HAP-1 (cell line): ENCODE measurements at regions of chr5 and their contacts with region 1.

Region 1: DNA sequence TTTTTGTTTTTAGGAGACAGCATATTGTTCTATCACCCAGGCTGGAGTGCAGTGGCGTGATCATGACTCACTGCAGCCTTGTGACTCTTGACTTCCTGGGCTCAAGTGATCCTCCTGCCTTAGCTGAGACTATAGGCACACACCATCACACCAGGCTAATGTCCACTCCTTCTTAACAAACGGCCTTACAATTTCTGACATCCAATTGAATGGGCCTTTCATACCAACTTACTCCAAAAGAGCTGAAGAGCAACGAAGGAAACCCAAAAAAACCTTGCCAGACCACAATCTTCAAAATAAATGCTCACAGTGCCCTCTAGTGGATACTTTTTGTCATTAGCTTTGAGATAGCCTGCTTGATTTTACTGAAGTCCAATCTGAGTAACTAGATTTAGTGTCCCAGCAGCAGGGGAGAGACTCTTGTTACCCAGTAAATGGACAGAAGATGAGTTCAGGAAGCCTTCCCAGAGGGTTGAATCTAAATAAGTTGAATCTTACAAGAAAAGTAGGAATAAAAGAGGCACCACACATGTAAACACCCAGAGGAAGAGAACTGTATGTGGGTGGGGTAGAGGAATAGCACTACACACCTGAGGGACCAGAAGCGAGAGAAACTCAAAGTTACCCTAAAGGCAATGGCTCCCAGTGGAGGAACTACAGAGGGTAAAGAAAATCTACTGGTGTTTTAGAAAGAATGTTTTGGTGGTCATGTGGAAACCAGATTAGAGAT is 9.3 kb downstream of the ZNF622 start:
- DNase-seq: peak; percentile 30 to 45
- H3K4me3 ChIP-seq: no peak overlapping the region
- H3K4me1 ChIP-seq: no peaks in the 10 kb centered on the region
- H3K27me3 ChIP-seq: no peaks in the 10 kb centered on the region

Region 2: DNA sequence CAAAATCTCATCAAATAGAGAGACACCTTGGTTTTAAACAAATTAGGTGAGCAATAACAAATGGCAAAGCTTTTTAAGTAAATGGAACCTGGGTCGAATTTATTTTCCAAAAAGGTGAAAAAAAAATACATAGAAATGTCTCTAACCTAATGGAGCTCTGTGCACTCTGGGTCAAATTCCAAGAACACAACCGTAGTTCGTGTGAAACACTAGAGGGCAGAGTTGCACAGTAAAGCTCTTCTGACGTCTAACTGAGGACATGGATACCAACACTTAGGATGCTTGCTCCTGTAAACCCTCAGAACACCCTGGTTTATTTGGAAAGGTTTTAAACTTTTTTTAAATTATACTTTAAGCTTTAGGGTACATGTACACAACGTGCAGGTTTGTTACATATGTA is 295.6 kb before region 1 on chr5:
- in situ Hi-C with region 1: loop called (anchors 10 kb)
- DNase-seq: peak; percentile 45 to 53
- H3K4me3 ChIP-seq: no peak overlapping the region
- H3K4me1 ChIP-seq: no peaks in the 10 kb centered on the region
- H3K27me3 ChIP-seq: no peaks in the 10 kb centered on the region

Region 3: GRCh38 chr5:16364910-16365309 is 91.4 kb before region 1 on chr5:
- in situ Hi-C with region 1: no loop called
- DNase-seq: no peak
- H3K4me3 ChIP-seq: no peak overlapping the region
- H3K4me1 ChIP-seq: no peaks in the 10 kb centered on the region
- H3K27me3 ChIP-seq: peaks cover 6% of the 10 kb centered on the region; the same call in 1 of the 2 replicates